Ovary (tissue), 10 donors: ENCODE measurements at regions of chr3 and their contacts with region 1.

Region 1: DNA sequence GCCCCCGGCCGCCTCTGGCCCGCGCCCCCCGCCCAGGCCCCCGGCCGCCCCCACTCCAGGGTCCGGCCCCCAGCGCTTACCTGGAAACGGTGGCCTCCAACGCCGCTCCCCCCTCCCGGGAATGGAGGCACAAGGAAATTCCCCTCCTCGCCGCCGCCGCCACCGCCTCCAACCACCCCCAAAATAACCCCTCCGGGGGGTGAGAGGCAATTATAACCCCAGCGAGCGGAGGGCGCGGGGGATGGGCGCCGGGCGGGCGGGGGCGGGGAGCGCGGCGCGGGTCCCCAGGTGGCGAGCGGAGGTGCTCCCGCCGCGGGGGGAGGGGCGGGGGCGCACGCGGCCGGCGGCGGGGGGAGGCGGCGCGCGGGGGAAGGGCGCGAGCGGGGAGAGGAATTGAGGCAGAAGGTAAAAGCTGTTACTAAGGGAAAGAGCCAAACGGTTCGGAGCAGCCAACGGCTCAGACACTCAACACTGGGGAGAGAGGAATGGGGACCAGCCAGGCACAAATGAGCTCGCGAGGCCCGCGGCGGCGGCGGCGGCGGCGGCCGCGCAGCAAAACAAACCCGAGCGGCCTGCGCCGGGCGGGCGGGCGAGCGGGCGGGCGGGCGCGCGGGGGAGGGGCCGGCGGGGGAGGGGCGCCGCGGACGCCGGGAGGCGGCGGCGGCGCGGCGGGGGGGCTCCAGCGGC is at the start of gene TBL1XR1:
- DNase-seq: peak; percentile 92 to 94 (median 93)
- H3K4me3 ChIP-seq: peak within 1 kb of the TSS; percentile 78
- H3K27ac ChIP-seq: peak within 1 kb of the TSS; percentile 94 to 95
- H3K4me1 ChIP-seq: no peaks in the 10 kb centered on the region
- H3K27me3 ChIP-seq: no peaks in the 10 kb centered on the region
- CTCF ChIP-seq: no peak
- EP300 ChIP-seq: peak; percentile 61
- POLR2A ChIP-seq: no peak
- total RNA-seq, gene TBL1XR1: 73.8 to 160 (median 132) TPM

Region 2: GRCh38 chr3:177050501-177051237 is 146.5 kb before region 1 on chr3:
- intact Hi-C with region 1: loop called in 1 of 4 experiments (anchors 10 kb)
- DNase-seq: no peak
- H3K4me3 ChIP-seq: no peak overlapping the region
- H3K27ac ChIP-seq: no peak overlapping the region
- H3K4me1 ChIP-seq: no peaks in the 10 kb centered on the region
- H3K27me3 ChIP-seq: no peaks in the 10 kb centered on the region
- CTCF ChIP-seq: peak; percentile 25 to 56 (median 46)
- EP300 ChIP-seq: no peak
- POLR2A ChIP-seq: no peak

Region 3: DNA sequence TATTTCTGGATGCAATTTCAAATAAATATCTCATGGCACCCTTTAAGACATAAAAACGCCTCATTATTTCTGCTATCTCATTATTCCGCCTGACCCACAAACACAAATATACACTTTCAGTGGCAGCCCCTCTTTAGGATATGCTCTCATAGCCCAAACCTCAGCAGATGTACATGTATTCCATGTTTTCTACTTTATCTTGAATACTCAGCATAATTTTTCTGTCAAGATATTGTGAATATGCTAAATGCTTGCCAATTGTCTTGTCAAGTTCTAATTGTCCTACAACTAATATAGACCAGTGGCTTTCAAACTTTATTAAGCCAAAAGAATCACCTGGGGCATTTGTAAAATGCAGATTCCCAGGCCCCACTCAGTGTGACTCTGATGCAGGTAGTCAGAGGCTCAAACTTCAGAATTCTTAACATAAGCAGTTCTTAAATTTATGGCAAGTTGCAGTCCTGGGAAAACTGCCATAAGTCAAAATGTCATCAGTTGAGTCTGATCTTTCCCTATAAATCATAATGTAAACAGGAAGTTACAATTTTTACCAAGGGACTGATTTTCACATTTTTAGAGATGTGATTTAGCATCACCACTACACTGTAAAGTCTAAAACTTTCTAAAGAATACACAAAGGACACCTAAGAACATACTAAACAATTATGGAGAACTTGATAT is 135.0 kb before region 1 on chr3:
- intact Hi-C with region 1: loop called in 3 of 4 experiments (anchors 5 to 10 kb)
- DNase-seq: no peak
- H3K4me3 ChIP-seq: no peak overlapping the region
- H3K27ac ChIP-seq: no peak overlapping the region
- H3K4me1 ChIP-seq: peaks cover 11% of the 10 kb centered on the region
- H3K27me3 ChIP-seq: no peaks in the 10 kb centered on the region
- CTCF ChIP-seq: no peak
- EP300 ChIP-seq: no peak
- POLR2A ChIP-seq: no peak

Region 4: GRCh38 chr3:177069514-177070329 is 127.5 kb before region 1 on chr3:
- intact Hi-C with region 1: loop called in 2 of 4 experiments (anchors 5 to 10 kb)
- DNase-seq: no peak
- H3K4me3 ChIP-seq: no peak overlapping the region
- H3K27ac ChIP-seq: no peak overlapping the region
- H3K4me1 ChIP-seq: peaks cover 3% of the 10 kb centered on the region
- H3K27me3 ChIP-seq: no peaks in the 10 kb centered on the region
- CTCF ChIP-seq: no peak
- EP300 ChIP-seq: no peak
- POLR2A ChIP-seq: no peak

Region 5: GRCh38 chr3:177359593-177360357 is 162.6 kb after region 1 on chr3:
- intact Hi-C with region 1: loop called (anchors 1 to 5 kb)
- DNase-seq: peak; percentile 94 to 98 (median 97)
- H3K4me3 ChIP-seq: peak overlapping the region; percentile 32
- H3K27ac ChIP-seq: peak overlapping the region in 1 of 2 donors; percentile 92
- H3K4me1 ChIP-seq: peaks cover 20% of the 10 kb centered on the region
- H3K27me3 ChIP-seq: no peaks in the 10 kb centered on the region
- CTCF ChIP-seq: no peak
- EP300 ChIP-seq: peak; percentile 92
- POLR2A ChIP-seq: no peak

Region 6: GRCh38 chr3:177516158-177517011 is 319.2 kb after region 1 on chr3:
- intact Hi-C with region 1: loop called in 1 of 4 experiments (anchors 10 kb)
- DNase-seq: peak; percentile 49 to 76 (median 58)
- H3K4me3 ChIP-seq: no peak overlapping the region
- H3K27ac ChIP-seq: peak overlapping the region in 1 of 2 donors; percentile 7
- H3K4me1 ChIP-seq: peaks cover 13% of the 10 kb centered on the region
- H3K27me3 ChIP-seq: no peaks in the 10 kb centered on the region
- CTCF ChIP-seq: no peak
- EP300 ChIP-seq: no peak
- POLR2A ChIP-seq: no peak

Region 7: DNA sequence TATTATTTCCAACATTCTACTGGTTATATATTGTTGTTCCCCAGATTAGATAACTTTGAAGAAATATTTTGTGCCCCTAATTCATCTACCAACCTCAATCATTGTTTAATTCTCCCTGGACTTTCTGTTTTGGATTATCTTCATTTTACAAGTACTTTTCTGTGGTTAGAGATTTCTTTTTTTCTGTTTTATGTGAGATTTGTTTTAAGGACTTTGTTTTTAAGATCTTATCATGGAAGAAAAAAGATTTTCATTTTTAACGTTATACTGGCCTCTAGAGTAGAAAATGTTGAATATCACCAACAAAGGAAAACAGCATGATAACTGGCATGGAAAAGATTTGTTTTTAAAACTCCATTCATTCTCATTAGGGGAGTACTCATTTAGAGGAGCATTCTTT is 1128.1 kb after region 1 on chr3:
- intact Hi-C with region 1: loop called in 2 of 4 experiments (anchors 5 to 10 kb)
- DNase-seq: no peak
- H3K4me3 ChIP-seq: no peak overlapping the region
- H3K27ac ChIP-seq: no peak overlapping the region
- H3K4me1 ChIP-seq: peaks cover 8% of the 10 kb centered on the region
- H3K27me3 ChIP-seq: no peaks in the 10 kb centered on the region
- CTCF ChIP-seq: peak in 2 of 3 donors; percentile 7 to 23
- EP300 ChIP-seq: no peak
- POLR2A ChIP-seq: no peak